Psoas muscle (tissue), 8 donors: ENCODE measurements at regions of chr3 and their contacts with region 1.

Region 1: DNA sequence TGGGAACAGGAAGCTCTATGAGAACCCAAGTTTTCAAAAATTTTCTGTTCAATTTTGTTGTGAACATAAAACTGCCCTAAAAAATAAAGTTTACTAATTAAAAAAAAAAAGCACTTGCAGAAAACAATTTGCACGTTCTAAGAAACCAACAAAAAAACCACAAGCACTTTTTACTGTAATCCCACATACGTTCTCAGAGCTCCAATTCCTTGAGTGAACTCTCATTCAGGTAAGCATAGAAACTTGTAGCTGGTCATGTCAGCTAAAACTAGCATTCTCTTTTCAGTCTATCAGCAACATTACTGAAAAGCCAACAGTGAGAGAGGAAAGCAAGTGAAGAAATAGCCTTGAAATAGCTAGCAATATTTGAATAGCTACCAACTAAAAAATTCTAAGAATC is 11.5 kb upstream of the TMF1 start:
- DNase-seq: no peak
- ATAC-seq: no peak
- H3K4me3 ChIP-seq: no peak overlapping the region
- H3K27ac ChIP-seq: no peak overlapping the region
- H3K4me1 ChIP-seq: no peaks in the 10 kb centered on the region
- H3K27me3 ChIP-seq: no peaks in the 10 kb centered on the region
- CTCF ChIP-seq: no peak

Region 2: GRCh38 chr3:69009559-69010410 is 53.9 kb before region 1 on chr3:
- intact Hi-C with region 1: no loop called
- DNase-seq: no peak
- ATAC-seq: no peak
- H3K4me3 ChIP-seq: no peak overlapping the region
- H3K27ac ChIP-seq: peak overlapping the region; percentile 10
- H3K4me1 ChIP-seq: peaks cover 29% of the 10 kb centered on the region
- H3K27me3 ChIP-seq: no peaks in the 10 kb centered on the region
- CTCF ChIP-seq: no peak

Region 3: GRCh38 chr3:69020424-69020823 is 43.2 kb before region 1 on chr3:
- intact Hi-C with region 1: loop called in 1 of 2 experiments (anchors 5 kb)
- DNase-seq: no peak
- ATAC-seq: no peak
- H3K4me3 ChIP-seq: no peak overlapping the region
- H3K27ac ChIP-seq: no peak overlapping the region
- H3K4me1 ChIP-seq: no peaks in the 10 kb centered on the region
- H3K27me3 ChIP-seq: no peaks in the 10 kb centered on the region
- CTCF ChIP-seq: no peak

Region 4: DNA sequence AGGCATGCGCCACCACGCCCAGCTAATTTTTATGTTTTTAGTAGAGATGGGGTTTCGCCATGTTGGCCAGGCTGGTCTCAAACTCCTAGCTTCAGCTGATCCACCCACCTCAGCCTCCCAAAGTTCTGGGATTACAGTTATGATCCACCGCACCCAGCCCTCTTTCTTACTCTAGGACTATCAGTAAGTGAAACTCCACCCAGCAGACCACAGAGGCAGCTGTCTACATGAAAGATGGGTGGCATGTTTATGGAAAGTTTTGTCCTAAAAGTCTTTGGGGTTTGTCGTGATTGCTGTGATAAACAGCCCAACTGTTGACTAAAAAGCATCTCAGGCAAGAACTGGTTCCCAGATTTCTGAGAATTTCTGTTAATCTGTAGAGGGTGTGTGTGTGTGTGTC is 32.0 kb after region 1 on chr3:
- intact Hi-C with region 1: no loop called
- DNase-seq: no peak
- ATAC-seq: peak in 2 of 4 donors; percentile 25 to 34
- H3K4me3 ChIP-seq: no peak overlapping the region
- H3K27ac ChIP-seq: peak overlapping the region; percentile 98
- H3K4me1 ChIP-seq: peaks cover 83% of the 10 kb centered on the region
- H3K27me3 ChIP-seq: no peaks in the 10 kb centered on the region
- CTCF ChIP-seq: no peak